Activated CD4-positive, alpha-beta T cell treated with anti-CD3 and anti-CD28 coated beads, Interleukin-2, amount 10 ng/mL, durations not matched to agents 7 days and 5 days (primary cell): ENCODE measurements at regions of chr9 and their contacts with region 1.

Region 1: DNA sequence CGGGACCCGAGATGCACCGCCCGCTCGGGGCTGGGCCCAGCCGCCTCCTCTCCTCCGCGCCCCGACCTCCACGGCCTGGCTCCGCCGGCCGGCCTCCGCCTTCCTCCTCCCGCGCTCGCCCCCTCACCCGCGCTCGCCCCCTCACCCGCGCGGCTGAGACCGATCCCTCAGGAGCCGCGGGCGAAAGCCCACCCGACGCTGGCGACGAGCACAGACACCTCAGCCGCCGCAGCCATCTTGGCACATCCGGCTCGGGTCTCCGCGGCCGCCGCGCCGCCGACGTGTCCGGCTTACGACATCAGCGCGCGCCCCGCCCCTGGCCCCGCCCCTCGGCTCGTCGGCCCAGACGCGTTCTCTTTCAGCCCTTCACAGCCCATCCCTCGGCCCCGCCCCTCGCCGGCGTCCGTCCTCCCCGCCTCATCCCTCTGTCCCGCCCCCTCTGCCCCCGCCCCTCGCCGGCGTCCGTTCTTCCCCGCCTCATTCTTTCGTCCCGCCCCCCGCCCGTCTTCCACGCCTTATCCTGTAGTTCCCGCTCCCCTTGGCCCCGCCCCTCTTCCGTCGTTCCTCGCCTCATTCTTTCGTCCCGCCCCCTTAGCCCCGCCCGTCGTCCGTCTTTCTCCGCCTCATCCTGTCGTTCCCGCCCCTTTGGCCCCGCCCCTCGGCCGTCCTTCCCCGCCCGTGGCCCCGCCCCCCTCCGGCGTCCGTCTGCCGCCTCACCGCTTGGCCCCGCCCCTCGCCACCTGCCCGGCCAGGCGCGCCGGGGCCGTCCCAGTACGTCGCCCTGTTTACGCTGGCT is at the start of gene SEC16A:
- DNase-seq: peak; percentile 99
- H3K4me3 Mint-ChIP-seq: peak within 1 kb of the TSS; percentile 97
- H3K27ac Mint-ChIP-seq: peak within 1 kb of the TSS; percentile 100
- H3K4me1 Mint-ChIP-seq: peaks cover 27% of the 10 kb centered on the region
- H3K27me3 Mint-ChIP-seq: no peaks in the 10 kb centered on the region
- total RNA-seq, gene SEC16A: 72.1 to 74.5 TPM

Region 2: DNA sequence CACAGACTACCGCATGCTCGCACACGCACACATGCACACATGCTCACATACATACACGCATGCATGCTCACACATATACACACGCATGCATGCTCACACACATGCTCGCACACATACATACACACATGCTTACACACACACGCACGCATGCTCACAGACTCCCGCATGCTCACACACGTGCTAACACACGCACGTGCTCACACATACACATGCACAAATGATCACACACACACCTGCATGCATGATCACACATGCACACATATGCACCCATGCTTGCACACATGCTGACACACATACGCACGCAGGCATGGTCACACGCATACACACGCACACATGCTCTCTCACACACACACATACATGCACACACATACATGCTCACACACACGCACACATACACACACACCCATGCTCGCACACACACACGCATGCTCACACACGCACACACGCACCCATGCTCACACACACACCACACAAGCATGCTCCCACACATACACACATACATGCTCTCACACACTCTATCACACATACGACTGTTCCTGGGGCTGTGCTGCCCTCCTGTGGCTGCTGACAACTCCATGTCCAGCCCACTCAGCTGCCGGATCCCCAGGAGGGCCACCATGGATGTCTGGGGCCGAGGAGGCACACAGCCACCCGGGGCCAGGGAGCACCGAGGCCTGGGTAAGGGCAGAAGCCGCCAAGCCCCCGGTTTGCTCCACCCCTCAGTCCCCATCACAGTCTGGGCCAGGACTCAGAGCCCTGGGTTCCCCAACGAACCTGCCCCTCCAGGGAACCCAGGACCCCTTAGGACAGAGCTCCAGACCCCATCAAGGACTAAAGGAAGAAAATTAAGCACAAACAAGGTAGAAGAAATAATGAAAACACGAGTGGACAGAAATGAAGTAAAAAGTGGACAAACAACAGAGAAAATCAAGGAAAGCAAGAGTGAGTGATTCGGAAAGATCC is 148.3 kb after region 1 on chr9:
- CTCF ChIA-PET with region 1: interaction called, 19 read pairs
- POLR2A ChIA-PET with region 1: no interaction called
- DNase-seq: peak; percentile 76
- H3K4me3 Mint-ChIP-seq: no peak overlapping the region
- H3K27ac Mint-ChIP-seq: no peak overlapping the region
- H3K4me1 Mint-ChIP-seq: no peaks in the 10 kb centered on the region
- H3K27me3 Mint-ChIP-seq: peaks cover 3% of the 10 kb centered on the region

Region 3: GRCh38 chr9:136644598-136645351 is 161.8 kb after region 1 on chr9:
- CTCF ChIA-PET with region 1: interaction called, 16 read pairs
- POLR2A ChIA-PET with region 1: no interaction called
- DNase-seq: peak; percentile 77
- H3K4me3 Mint-ChIP-seq: no peak overlapping the region
- H3K27ac Mint-ChIP-seq: no peak overlapping the region
- H3K4me1 Mint-ChIP-seq: no peaks in the 10 kb centered on the region
- H3K27me3 Mint-ChIP-seq: peaks cover 24% of the 10 kb centered on the region